ENCODE measurements at regions of chr17 and their contacts with region 1.

Region 1: GRCh38 chr17:42072323-42073187 is 22.2 kb upstream of the C17orf113 start:
- DNase-seq: peak in 1 of 2 experiments; percentile 76
- H3K4me3 ChIP-seq: peak overlapping the region; percentile 52 to 88 (median 57)
- H3K27ac ChIP-seq: no peak overlapping the region
- H3K4me1 ChIP-seq: peaks cover 0 to 8% (median 4%) of the 10 kb centered on the region in 4 experiments; a peak in 4 of 7 replicates
- H3K27me3 ChIP-seq: no peaks in the 10 kb centered on the region; a peak in 2 of 7 replicates
- CTCF ChIP-seq: no peak
- EP300 ChIP-seq: no peak
- POLR2A ChIP-seq: no peak
- RAD21 ChIP-seq: no peak; a peak in 1 of 4 replicates

Region 2: DNA sequence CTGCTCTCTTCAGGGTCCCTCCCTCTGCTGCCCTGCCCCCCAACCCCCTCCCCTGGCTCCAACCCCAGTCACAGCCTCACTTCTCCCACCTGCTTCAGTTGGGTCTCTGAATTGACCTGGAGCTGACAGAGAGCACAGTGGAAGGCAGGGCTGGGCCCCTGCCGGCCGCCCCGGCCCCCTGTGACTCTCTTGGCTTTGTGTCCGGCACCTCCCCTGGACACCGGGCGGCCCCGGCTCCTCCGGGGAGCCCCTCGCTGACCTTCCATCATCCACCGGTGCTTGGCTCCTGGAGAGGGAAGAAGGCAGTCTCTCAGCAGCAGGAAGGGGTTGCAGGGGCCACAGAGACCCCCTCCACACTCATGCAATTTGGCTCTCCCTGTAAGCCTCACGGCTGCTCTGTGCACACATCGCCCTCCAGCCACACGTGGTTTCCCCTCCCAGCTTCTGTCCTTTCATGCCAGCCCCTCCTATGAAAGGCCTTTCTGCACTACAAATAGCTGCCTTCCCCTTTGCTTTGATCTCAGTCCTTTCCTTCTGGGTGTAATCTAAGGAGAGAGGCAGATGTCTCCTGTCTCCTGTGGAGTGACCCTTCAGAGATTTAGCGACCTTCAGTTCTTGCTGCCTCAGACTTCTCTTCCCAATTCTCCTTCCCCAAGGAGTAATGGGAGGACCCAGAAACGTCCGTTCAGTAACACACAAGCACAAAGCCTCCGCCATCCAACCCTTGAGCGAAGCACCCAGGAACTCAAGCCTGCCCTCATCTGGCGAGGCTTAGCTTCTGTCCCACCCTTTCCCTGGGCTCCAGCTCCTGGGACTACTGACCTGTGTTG is 44.4 kb before region 1 on chr17:
- CTCF ChIA-PET with region 1: interaction called, 79 read pairs
- POLR2A ChIA-PET with region 1: interaction called, 3 read pairs
- DNase-seq: peak in 1 of 2 experiments; percentile 77
- H3K4me3 ChIP-seq: no peak overlapping the region
- H3K27ac ChIP-seq: no peak overlapping the region
- H3K4me1 ChIP-seq: peaks cover 0 to 12% (median 5%) of the 10 kb centered on the region in 4 experiments; a peak in 4 of 7 replicates
- H3K27me3 ChIP-seq: no peaks in the 10 kb centered on the region
- CTCF ChIP-seq: peak; percentile 65 to 91 (median 80)
- EP300 ChIP-seq: no peak
- POLR2A ChIP-seq: no peak
- RAD21 ChIP-seq: peak; percentile 35 to 58

Region 3: GRCh38 chr17:42061646-42062487 is 10.7 kb before region 1 on chr17:
- CTCF ChIA-PET with region 1: interaction called, 114 read pairs
- POLR2A ChIA-PET with region 1: interaction called, 5 read pairs
- DNase-seq: no peak
- H3K4me3 ChIP-seq: no peak overlapping the region
- H3K27ac ChIP-seq: no peak overlapping the region
- H3K4me1 ChIP-seq: peaks cover 0 to 6% (median 3%) of the 10 kb centered on the region in 4 experiments; a peak in 6 of 7 replicates
- H3K27me3 ChIP-seq: no peaks in the 10 kb centered on the region
- CTCF ChIP-seq: no peak
- EP300 ChIP-seq: no peak
- POLR2A ChIP-seq: no peak
- RAD21 ChIP-seq: no peak

Region 4: DNA sequence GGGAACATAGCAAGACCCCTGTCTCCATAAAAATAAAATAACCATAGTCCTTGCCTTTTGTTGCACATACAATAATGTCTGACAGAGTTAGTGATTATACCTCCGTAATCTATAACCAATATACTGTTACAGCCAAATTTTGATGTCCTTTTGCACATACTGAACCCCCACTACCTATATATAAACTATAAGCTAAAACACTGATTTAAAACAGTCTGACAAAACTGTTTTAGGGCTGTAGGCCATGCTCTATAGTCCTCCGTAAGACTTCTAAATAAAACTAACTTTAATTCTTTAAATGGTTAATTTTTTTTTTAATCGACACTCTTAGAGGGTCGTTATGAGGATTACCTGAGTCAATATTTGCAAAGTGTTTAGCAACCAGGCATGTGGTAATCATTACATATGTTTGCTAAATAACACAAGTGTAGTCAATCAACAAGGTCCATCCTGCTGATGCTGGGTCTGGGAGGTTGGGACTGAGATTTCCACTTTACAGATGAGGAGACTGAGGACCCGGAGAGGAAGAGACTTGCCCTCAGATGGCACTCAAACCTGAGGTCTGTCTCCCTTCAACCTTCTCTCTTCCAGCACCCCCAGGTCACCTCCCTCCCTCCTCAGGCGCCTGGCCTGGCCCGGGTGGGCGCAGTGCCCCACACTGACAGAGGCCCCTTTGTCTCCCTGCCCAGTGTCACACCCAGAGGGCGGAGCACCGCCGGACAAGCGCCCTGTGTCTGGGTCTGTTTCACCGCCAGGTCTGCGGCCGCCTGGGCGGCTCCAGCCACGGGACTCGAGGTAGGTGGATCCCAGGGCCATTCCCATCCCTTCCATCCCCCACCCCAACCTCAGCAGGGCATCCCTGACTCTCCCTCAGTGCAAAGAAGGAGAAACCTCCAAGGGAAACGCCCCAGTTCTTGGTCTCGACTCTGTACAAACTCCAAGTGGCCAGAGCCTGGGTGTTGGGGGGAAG is 15.5 kb after region 1 on chr17:
- CTCF ChIA-PET with region 1: interaction called, 150 read pairs
- POLR2A ChIA-PET with region 1: no interaction called
- DNase-seq: no peak
- H3K4me3 ChIP-seq: no peak overlapping the region
- H3K27ac ChIP-seq: no peak overlapping the region
- H3K4me1 ChIP-seq: peaks cover 0 to 2% (median 0%) of the 10 kb centered on the region in 4 experiments; a peak in 1 of 7 replicates
- H3K27me3 ChIP-seq: no peaks in the 10 kb centered on the region
- CTCF ChIP-seq: no peak
- EP300 ChIP-seq: no peak
- POLR2A ChIP-seq: no peak
- RAD21 ChIP-seq: no peak

Region 5: DNA sequence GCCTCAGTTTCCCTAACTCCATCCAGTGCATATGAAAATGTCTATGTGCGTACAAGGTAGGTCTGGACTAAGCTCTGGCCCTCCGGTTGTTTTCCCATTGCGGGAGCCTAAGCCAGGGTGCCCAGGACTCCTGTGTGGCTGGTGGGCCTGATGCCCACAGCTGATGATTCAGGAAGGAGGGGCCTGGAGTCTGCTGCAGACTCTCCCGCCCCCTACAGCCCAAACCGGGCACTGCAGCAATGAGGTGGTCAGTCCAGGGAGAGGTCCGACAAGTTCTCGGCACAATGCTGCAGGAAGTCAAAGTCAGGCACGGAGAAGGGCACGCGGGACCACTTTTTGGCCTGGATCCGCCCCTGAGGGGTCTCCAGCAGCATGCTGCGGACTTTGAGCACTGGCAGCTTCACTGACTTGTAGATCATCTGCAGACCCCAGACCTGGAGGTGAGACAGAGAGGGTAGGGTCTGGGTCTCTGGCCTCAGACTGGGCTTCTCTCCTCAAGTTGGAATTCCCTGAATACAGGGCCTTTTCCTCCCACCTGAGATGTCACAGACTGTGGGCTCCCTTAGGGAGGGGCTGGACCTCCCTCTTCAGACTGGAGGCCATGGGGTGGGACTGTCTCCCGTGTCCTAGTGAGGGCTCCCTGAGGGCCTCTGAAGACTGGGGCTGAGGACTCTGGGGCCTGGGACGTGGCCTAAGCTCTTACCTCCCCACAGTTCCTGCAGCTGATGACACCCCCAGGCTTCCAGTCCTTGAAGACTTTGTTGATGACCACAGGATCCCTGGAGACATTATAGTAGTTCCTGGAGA is 29.2 kb after region 1 on chr17:
- CTCF ChIA-PET with region 1: interaction called, 381 read pairs
- POLR2A ChIA-PET with region 1: interaction called, 5 read pairs
- DNase-seq: peak; percentile 73 to 100
- H3K4me3 ChIP-seq: no peak overlapping the region
- H3K27ac ChIP-seq: no peak overlapping the region
- H3K4me1 ChIP-seq: peaks cover 0 to 11% (median 8%) of the 10 kb centered on the region in 4 experiments; a peak in 6 of 7 replicates
- H3K27me3 ChIP-seq: peaks cover 4 to 15% (median 15%) of the 10 kb centered on the region in 4 experiments
- CTCF ChIP-seq: peak; percentile 95 to 99 (median 98)
- EP300 ChIP-seq: no peak
- POLR2A ChIP-seq: no peak
- RAD21 ChIP-seq: peak; percentile 93 to 96

Measured in H1 (cell line).